CD4-positive, alpha-beta memory T cell (primary cell): ENCODE measurements at regions of chr3 and their contacts with region 1.

Region 1: GRCh38 chr3:184354121-184354728 is 7.2 kb downstream of the CLCN2 start:
- DNase-seq: peak in 4 of 5 donors; percentile 39 to 55 (median 43)
- H3K4me3 ChIP-seq: no peak overlapping the region
- H3K4me3 Mint-ChIP-seq: peak overlapping the region in 1 of 8 donors; percentile 15
- H3K27ac ChIP-seq: no peak overlapping the region
- H3K27ac Mint-ChIP-seq: no peak overlapping the region
- H3K4me1 ChIP-seq: peaks cover 10% of the 10 kb centered on the region
- H3K4me1 Mint-ChIP-seq: peaks cover 0 to 5% (median 0%) of the 10 kb centered on the region in 4 donors
- H3K27me3 ChIP-seq: no peaks in the 10 kb centered on the region
- H3K27me3 Mint-ChIP-seq: no peaks in the 10 kb centered on the region

Region 2: GRCh38 chr3:184078851-184079250 is 275.4 kb before region 1 on chr3:
- CTCF ChIA-PET with region 1: no interaction called
- POLR2A ChIA-PET with region 1: no interaction called
- intact Hi-C with region 1: no loop called
- DNase-seq: no peak
- H3K4me3 ChIP-seq: no peak overlapping the region
- H3K4me3 Mint-ChIP-seq: no peak overlapping the region
- H3K27ac ChIP-seq: no peak overlapping the region
- H3K27ac Mint-ChIP-seq: no peak overlapping the region
- H3K4me1 ChIP-seq: no peaks in the 10 kb centered on the region
- H3K4me1 Mint-ChIP-seq: peaks cover 0 to 1% (median 0%) of the 10 kb centered on the region in 4 donors
- H3K27me3 ChIP-seq: no peaks in the 10 kb centered on the region
- H3K27me3 Mint-ChIP-seq: peaks cover 11 to 13% of the 10 kb centered on the region in 2 donors

Region 3: GRCh38 chr3:184371570-184372018 is 17.4 kb after region 1 on chr3:
- CTCF ChIA-PET with region 1: interaction called, 32 read pairs
- POLR2A ChIA-PET with region 1: no interaction called
- intact Hi-C with region 1: no loop called
- DNase-seq: peak; percentile 47 to 62 (median 58)
- H3K4me3 ChIP-seq: no peak overlapping the region
- H3K4me3 Mint-ChIP-seq: no peak overlapping the region
- H3K27ac ChIP-seq: no peak overlapping the region
- H3K27ac Mint-ChIP-seq: no peak overlapping the region
- H3K4me1 ChIP-seq: no peaks in the 10 kb centered on the region
- H3K4me1 Mint-ChIP-seq: peaks cover 6 to 18% (median 10%) of the 10 kb centered on the region in 4 donors
- H3K27me3 ChIP-seq: no peaks in the 10 kb centered on the region
- H3K27me3 Mint-ChIP-seq: peaks cover 9 to 11% of the 10 kb centered on the region in 2 donors

Region 4: GRCh38 chr3:184469423-184469822 is 115.2 kb after region 1 on chr3:
- CTCF ChIA-PET with region 1: interaction called, 3 read pairs
- POLR2A ChIA-PET with region 1: no interaction called
- intact Hi-C with region 1: loop called (anchors 5 kb)
- DNase-seq: no peak
- H3K4me3 ChIP-seq: no peak overlapping the region
- H3K4me3 Mint-ChIP-seq: no peak overlapping the region
- H3K27ac ChIP-seq: no peak overlapping the region
- H3K27ac Mint-ChIP-seq: no peak overlapping the region
- H3K4me1 ChIP-seq: no peaks in the 10 kb centered on the region
- H3K4me1 Mint-ChIP-seq: peaks cover 2 to 8% (median 4%) of the 10 kb centered on the region in 4 donors
- H3K27me3 ChIP-seq: no peaks in the 10 kb centered on the region
- H3K27me3 Mint-ChIP-seq: peaks cover 10 to 25% of the 10 kb centered on the region in 2 donors